ENCODE measurements at regions of chr2 and their contacts with region 1.

Region 1: GRCh38 chr2:66434679-66435548 is at the start of gene MEIS1:
- DNase-seq: peak; percentile 91
- ATAC-seq: peak; percentile 90
- H3K4me3 ChIP-seq: peak within 1 kb of the TSS; percentile 71 to 93 (median 85)
- H3K27ac ChIP-seq: peak within 1 kb of the TSS; percentile 72
- H3K4me1 ChIP-seq: peaks cover 19% of the 10 kb centered on the region
- H3K27me3 ChIP-seq: peaks cover 0 to 11% of the 10 kb centered on the region in 2 experiments; a peak in 3 of 5 replicates
- CTCF ChIP-seq: peak; percentile 38
- EP300 ChIP-seq: peak; percentile 35 to 60; a peak in 2 of 4 replicates
- POLR2A ChIP-seq: peak; percentile 95 to 96
- RAD21 ChIP-seq: no peak
- total RNA-seq, gene MEIS1: 4.5 and 6.0 TPM in 2 replicates

Region 2: GRCh38 chr2:65630643-65631042 is 804.3 kb before region 1 on chr2:
- CTCF ChIA-PET with region 1: no interaction called
- POLR2A ChIA-PET with region 1: no interaction called
- in situ Hi-C with region 1: loop called (anchors 25 kb)
- intact Hi-C with region 1: no loop called
- DNase-seq: no peak
- ATAC-seq: no peak
- H3K4me3 ChIP-seq: no peak overlapping the region
- H3K27ac ChIP-seq: no peak overlapping the region
- H3K4me1 ChIP-seq: no peaks in the 10 kb centered on the region
- H3K27me3 ChIP-seq: peaks cover 0 to 6% of the 10 kb centered on the region in 2 experiments; a peak in 1 of 5 replicates
- CTCF ChIP-seq: no peak
- EP300 ChIP-seq: no peak
- POLR2A ChIP-seq: no peak
- RAD21 ChIP-seq: no peak

Region 3: DNA sequence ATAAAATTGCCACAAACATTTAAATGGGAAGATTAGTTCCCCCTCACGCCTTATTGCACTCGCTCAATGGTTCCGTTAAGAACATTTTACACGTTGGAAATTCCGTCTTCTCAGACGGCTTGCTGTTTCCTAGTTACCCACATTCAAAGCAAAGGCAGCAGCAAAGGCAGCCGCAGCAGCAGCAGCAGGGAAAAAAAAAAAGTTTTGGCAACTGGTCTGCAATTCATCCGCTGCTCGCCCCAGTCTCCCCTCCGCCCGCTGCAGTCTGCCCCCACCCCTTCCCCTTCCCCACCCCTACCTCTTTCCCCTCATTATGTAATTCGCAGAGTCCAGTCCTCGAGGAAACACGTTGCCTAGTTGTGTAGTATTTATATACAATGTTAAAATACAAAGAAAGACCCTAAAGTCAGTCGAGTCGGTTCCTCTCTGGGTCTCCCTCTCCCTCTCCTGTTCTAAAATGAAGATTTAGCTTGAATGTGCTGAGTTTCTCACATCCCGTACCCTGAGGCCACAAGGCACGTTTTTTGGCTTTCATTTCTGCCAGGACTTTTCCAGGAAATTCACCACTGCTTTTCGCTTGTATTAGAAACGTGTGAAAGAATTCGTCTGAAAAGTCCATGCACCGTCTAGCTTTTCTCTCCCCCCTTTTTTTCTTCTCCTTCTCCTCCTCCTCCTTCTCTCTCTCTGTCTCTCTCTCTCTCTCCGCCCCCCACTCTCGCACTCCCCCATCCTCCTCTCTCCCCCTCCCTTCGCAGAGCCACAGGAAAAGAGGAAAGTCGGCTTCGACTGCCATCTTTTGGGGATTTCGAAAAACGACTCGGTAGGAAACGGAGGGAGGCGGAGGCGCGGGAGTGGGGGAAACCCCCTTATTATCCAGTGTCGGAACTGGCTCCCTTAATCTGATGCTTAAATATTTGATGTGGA is 140.0 kb after region 1 on chr2:
- CTCF ChIA-PET with region 1: interaction called, 23 read pairs
- POLR2A ChIA-PET with region 1: interaction called, 5 read pairs
- in situ Hi-C with region 1: loop called (anchors 5 kb)
- intact Hi-C with region 1: loop called (anchors 1 kb)
- DNase-seq: peak; percentile 57
- ATAC-seq: peak; percentile 61
- H3K4me3 ChIP-seq: peak overlapping the region; percentile 53 to 70 (median 62)
- H3K27ac ChIP-seq: no peak overlapping the region
- H3K4me1 ChIP-seq: peaks cover 36% of the 10 kb centered on the region
- H3K27me3 ChIP-seq: peaks cover 20 to 45% of the 10 kb centered on the region in 2 experiments
- CTCF ChIP-seq: peak; percentile 86
- EP300 ChIP-seq: no peak
- POLR2A ChIP-seq: no peak
- RAD21 ChIP-seq: peak; percentile 59

Region 4: GRCh38 chr2:67215214-67216055 is 780.5 kb after region 1 on chr2:
- CTCF ChIA-PET with region 1: no interaction called
- POLR2A ChIA-PET with region 1: no interaction called
- in situ Hi-C with region 1: loop called (anchors 25 kb)
- intact Hi-C with region 1: no loop called
- DNase-seq: peak; percentile 35
- ATAC-seq: peak; percentile 99
- H3K4me3 ChIP-seq: no peak overlapping the region
- H3K27ac ChIP-seq: no peak overlapping the region
- H3K4me1 ChIP-seq: no peaks in the 10 kb centered on the region
- H3K27me3 ChIP-seq: no peaks in the 10 kb centered on the region
- CTCF ChIP-seq: peak; percentile 85
- EP300 ChIP-seq: no peak
- POLR2A ChIP-seq: no peak
- RAD21 ChIP-seq: peak; percentile 89

Region 5: DNA sequence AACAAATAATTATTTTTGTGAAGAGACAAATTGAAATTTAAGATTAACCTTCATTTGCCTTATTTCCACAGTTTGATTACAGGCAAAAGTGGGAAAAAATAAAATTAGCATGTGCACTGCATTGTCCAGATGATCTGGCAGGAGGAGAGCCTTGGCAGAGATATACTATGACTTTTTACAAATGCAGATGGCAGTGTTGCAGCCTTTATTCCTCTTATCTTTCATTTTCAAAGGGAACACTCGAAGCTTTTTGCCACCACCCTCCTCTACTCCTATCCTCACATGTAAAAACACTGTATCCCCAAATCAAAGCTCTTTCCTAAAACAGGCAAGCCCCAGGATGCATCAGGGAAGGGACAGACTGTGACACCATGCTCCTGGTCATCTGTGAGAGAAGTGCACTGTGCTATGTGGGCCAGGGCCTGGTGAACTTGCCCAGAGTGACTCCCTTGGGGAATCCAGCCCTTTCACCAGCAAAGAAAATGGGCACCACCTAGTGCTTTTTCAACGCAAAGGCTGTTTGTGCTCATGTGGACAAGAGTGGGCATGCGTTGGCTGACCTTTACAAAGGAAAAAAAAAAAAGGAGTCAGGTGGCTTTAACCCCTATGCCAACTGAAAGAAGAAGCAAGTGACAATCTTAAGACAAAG is 887.6 kb after region 1 on chr2:
- CTCF ChIA-PET with region 1: no interaction called
- POLR2A ChIA-PET with region 1: no interaction called
- in situ Hi-C with region 1: loop called (anchors 25 kb)
- intact Hi-C with region 1: no loop called
- DNase-seq: peak; percentile 65
- ATAC-seq: peak; percentile 100
- H3K4me3 ChIP-seq: no peak overlapping the region
- H3K27ac ChIP-seq: no peak overlapping the region
- H3K4me1 ChIP-seq: no peaks in the 10 kb centered on the region
- H3K27me3 ChIP-seq: no peaks in the 10 kb centered on the region
- CTCF ChIP-seq: peak; percentile 83
- EP300 ChIP-seq: no peak
- POLR2A ChIP-seq: no peak
- RAD21 ChIP-seq: peak; percentile 75

Region 6: GRCh38 chr2:67397143-67397986 is 962.5 kb after region 1 on chr2 and contains the start of gene ETAA1:
- CTCF ChIA-PET with region 1: no interaction called
- POLR2A ChIA-PET with region 1: no interaction called
- in situ Hi-C with region 1: no loop called
- intact Hi-C with region 1: loop called (anchors 5 kb)
- DNase-seq: peak; percentile 87
- ATAC-seq: peak; percentile 100
- H3K4me3 ChIP-seq: peak within 1 kb of the TSS; percentile 86 to 91 (median 86)
- H3K27ac ChIP-seq: peak within 1 kb of the TSS; percentile 71
- H3K4me1 ChIP-seq: peaks cover 29% of the 10 kb centered on the region
- H3K27me3 ChIP-seq: no peaks in the 10 kb centered on the region; a peak in 1 of 5 replicates
- CTCF ChIP-seq: no peak
- EP300 ChIP-seq: no peak
- POLR2A ChIP-seq: peak; percentile 73 to 90
- RAD21 ChIP-seq: 0 out of 2 replicates have a peak, but pooled peaks have one; percentile 26
- total RNA-seq, gene ETAA1: 16.2 and 20.7 TPM in 2 replicates